IMR-90 (cell line): ENCODE measurements at regions of chr1 and their contacts with region 1.

Region 1: DNA sequence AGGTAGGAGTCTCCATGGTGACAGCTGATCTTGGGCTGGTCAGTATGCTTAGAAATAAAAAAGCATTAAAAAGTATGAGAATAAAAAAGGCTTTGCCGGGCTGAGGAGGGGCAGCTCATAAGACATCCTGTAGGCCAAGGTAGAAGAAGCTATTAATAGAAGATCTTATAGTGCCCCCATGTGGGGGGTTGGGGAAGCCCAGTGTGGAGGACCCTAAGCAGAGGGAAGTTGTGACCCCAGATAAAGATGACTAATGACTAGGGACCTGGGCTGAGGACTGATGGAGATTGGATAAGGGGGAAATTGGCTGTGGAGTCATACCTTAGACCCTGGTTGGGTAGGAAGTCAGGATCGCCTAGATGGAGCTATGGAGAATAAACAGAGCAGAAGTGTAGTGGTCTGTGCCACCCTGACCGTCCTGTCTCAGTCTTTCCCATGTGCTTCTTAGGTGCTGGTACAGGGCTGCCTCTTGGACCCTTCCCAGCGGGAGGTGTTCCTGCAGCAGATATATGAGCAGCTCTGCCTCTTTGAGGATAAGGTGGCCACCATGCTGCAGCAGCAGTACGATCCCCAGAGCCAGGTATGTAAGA is 25.0 kb downstream of the SZT2 start:
- DNase-seq: peak; percentile 52
- ATAC-seq: peak; percentile 88
- H3K4me3 ChIP-seq: no peak overlapping the region
- H3K27ac ChIP-seq: no peak overlapping the region
- H3K4me1 ChIP-seq: no peaks in the 10 kb centered on the region
- H3K27me3 ChIP-seq: no peaks in the 10 kb centered on the region
- CTCF ChIP-seq: peak; percentile 66
- POLR2A ChIP-seq: no peak
- RAD21 ChIP-seq: peak; percentile 83

Region 2: DNA sequence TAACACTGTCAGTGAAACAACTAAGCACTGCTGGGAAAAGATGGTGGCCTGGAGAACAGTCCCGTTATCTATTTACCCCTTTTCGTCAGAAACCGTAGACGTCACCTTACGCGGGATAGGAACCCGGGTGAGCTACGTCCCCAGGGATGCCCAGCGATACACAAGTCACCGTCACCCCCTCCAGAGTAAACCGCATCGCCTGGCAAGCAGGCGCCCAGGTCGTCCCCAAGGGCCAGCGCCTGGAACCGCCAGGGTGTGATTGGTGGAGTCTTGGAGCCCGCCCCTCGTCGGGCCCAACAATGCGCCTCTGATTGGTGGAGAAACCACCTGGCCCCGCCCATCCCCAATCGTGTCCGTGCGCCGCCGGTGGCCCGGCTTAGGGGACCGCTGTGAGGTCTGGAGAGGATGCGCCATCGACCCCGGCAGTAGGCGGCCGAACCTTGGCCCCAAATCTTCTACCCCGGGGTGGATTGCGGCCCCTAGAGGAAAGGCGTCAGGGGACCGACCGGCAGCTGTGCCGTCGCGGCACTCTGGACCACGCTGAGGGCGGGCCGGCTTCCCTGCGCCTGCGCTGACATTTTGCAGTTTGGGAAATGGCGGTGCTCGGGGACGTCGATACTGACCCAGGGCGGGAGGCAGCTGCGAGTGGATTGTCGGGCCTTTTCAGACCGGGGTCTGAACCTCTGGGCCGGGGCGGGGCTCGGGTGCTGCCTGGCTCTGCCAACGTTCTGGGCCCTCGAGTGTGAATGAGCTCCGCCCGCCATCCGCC is 490.5 kb before region 1 on chr1:
- CTCF ChIA-PET with region 1: no interaction called
- POLR2A ChIA-PET with region 1: no interaction called
- dilution Hi-C with region 1: no loop called
- in situ Hi-C with region 1: loop called (anchors 25 kb)
- intact Hi-C with region 1: no loop called
- DNase-seq: peak; percentile 75
- ATAC-seq: peak; percentile 93
- H3K4me3 ChIP-seq: peak overlapping the region; percentile 67
- H3K27ac ChIP-seq: peak overlapping the region; percentile 72
- H3K4me1 ChIP-seq: peaks cover 3% of the 10 kb centered on the region
- H3K27me3 ChIP-seq: no peaks in the 10 kb centered on the region
- CTCF ChIP-seq: peak; percentile 27; the same call in 1 of the 2 replicates
- POLR2A ChIP-seq: peak; percentile 60
- RAD21 ChIP-seq: no peak

Region 3: GRCh38 chr1:43227143-43227764 is 187.5 kb before region 1 on chr1:
- CTCF ChIA-PET with region 1: interaction called, 10 read pairs
- POLR2A ChIA-PET with region 1: no interaction called
- dilution Hi-C with region 1: no loop called
- in situ Hi-C with region 1: loop called (anchors 5 kb)
- intact Hi-C with region 1: loop called (anchors 1 kb)
- DNase-seq: peak; percentile 70
- ATAC-seq: peak; percentile 81
- H3K4me3 ChIP-seq: no peak overlapping the region
- H3K27ac ChIP-seq: no peak overlapping the region
- H3K4me1 ChIP-seq: peaks cover 18% of the 10 kb centered on the region
- H3K27me3 ChIP-seq: no peaks in the 10 kb centered on the region
- CTCF ChIP-seq: peak; percentile 92
- POLR2A ChIP-seq: 0 out of 2 replicates have a peak, but pooled peaks have one; percentile 45
- RAD21 ChIP-seq: peak; percentile 98

Region 4: GRCh38 chr1:43238085-43238484 is 176.6 kb before region 1 on chr1:
- CTCF ChIA-PET with region 1: no interaction called
- POLR2A ChIA-PET with region 1: no interaction called
- dilution Hi-C with region 1: no loop called
- in situ Hi-C with region 1: no loop called
- intact Hi-C with region 1: loop called (anchors 1 kb)
- DNase-seq: peak; percentile 64
- ATAC-seq: peak; percentile 88
- H3K4me3 ChIP-seq: no peak overlapping the region
- H3K27ac ChIP-seq: no peak overlapping the region
- H3K4me1 ChIP-seq: peaks cover 6% of the 10 kb centered on the region; the same call in 1 of the 2 replicates
- H3K27me3 ChIP-seq: no peaks in the 10 kb centered on the region
- CTCF ChIP-seq: peak; percentile 80
- POLR2A ChIP-seq: no peak
- RAD21 ChIP-seq: peak; percentile 89

Region 5: DNA sequence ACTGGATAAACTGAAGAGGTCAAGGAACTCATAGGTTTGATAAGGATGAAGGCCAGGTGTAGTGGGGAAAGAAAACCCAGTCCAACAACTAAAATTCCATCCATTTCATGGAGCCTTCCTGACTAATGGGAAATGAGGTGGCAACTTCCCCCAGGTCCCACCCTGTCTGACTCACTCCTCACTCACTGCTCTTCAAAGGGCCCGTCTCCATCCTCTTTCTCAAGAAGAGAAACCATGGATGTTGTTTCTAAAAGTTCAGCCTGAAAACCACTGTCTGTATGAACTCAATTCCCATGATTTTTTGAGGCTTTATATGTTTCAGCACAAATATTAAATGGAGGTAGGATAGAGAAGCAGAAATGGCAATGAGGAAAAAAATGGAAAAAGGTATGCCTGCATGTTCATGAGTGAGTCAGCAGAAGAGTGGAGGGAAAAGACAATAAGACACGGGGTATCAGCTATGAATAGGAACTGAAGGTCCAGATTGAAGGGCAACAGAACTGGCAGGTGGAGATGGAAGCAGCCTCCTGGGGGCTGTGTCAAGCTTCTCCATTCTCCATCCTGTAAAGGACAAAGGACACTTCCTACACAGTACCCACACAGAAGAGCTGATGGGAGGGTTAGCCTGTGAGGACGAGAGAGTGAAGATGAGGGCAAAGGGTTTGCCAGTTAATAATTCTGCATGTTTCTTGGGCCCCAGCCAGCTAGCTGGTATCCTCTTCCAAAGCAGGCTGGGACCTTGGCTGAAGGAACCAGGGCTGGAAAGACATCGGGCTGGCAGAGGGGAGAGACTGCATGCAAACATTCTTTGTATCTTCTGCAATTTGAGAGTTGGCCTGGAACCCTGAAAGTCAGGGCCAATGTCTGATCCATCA is 41.4 kb before region 1 on chr1:
- CTCF ChIA-PET with region 1: no interaction called
- POLR2A ChIA-PET with region 1: no interaction called
- dilution Hi-C with region 1: no loop called
- in situ Hi-C with region 1: no loop called
- intact Hi-C with region 1: no loop called
- DNase-seq: peak; percentile 88
- ATAC-seq: peak; percentile 42
- H3K4me3 ChIP-seq: no peak overlapping the region
- H3K27ac ChIP-seq: peak overlapping the region; percentile 60
- H3K4me1 ChIP-seq: peaks cover 13% of the 10 kb centered on the region
- H3K27me3 ChIP-seq: no peaks in the 10 kb centered on the region
- CTCF ChIP-seq: no peak
- POLR2A ChIP-seq: no peak
- RAD21 ChIP-seq: no peak

Region 6: GRCh38 chr1:43639976-43640789 is 225.5 kb after region 1 on chr1:
- CTCF ChIA-PET with region 1: no interaction called
- POLR2A ChIA-PET with region 1: no interaction called
- dilution Hi-C with region 1: no loop called
- in situ Hi-C with region 1: no loop called
- intact Hi-C with region 1: no loop called
- DNase-seq: no peak
- ATAC-seq: no peak
- H3K4me3 ChIP-seq: no peak overlapping the region
- H3K27ac ChIP-seq: no peak overlapping the region
- H3K4me1 ChIP-seq: peaks cover 2% of the 10 kb centered on the region; the same call in 1 of the 2 replicates
- H3K27me3 ChIP-seq: no peaks in the 10 kb centered on the region
- CTCF ChIP-seq: no peak
- POLR2A ChIP-seq: no peak
- RAD21 ChIP-seq: no peak